Sigmoid colon (tissue), 7 donors: ENCODE measurements at regions of chr5 and their contacts with region 1.

Region 1: GRCh38 chr5:146291421-146292074 is 47.1 kb upstream of the POU4F3 start:
- DNase-seq: no peak
- H3K4me3 ChIP-seq: no peak overlapping the region
- H3K27ac ChIP-seq: no peak overlapping the region
- H3K4me1 ChIP-seq: peaks cover 0 to 5% (median 0%) of the 10 kb centered on the region in 4 donors
- H3K27me3 ChIP-seq: no peaks in the 10 kb centered on the region
- CTCF ChIP-seq: peak in 3 of 4 experiments; percentile 14 to 41 (median 22)
- EP300 ChIP-seq: no peak
- POLR2A ChIP-seq: no peak

Region 2: GRCh38 chr5:146203011-146203871 is 88.3 kb before region 1 on chr5 and contains the start of gene RBM27:
- intact Hi-C with region 1: no loop called
- DNase-seq: peak; percentile 99
- H3K4me3 ChIP-seq: peak within 1 kb of the TSS; percentile 68 to 98 (median 88)
- H3K27ac ChIP-seq: peak within 1 kb of the TSS; percentile 83 to 92 (median 86)
- H3K4me1 ChIP-seq: peaks cover 0 to 42% (median 33%) of the 10 kb centered on the region in 4 donors
- H3K27me3 ChIP-seq: no peaks in the 10 kb centered on the region
- CTCF ChIP-seq: no peak
- EP300 ChIP-seq: no peak
- POLR2A ChIP-seq: peak; percentile 54 to 62
- total RNA-seq, gene RBM27: 20.1 to 30.9 (median 25.0) TPM

Region 3: DNA sequence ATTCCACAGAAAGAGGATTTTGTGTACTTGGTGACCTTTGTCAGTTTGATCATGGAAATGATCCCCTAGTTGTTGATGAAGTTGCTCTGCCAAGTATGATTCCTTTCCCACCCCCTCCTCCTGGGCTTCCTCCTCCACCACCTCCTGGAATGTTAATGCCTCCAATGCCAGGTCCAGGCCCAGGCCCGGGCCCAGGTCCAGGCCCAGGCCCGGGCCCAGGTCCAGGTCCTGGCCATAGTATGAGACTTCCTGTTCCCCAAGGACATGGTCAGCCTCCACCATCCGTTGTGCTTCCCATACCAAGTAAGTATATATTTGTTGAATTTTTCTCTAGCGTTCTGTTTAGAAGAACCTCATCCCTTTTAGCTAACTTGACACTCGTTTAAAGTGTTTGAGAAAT is 58.1 kb before region 1 on chr5:
- intact Hi-C with region 1: no loop called
- DNase-seq: no peak
- H3K4me3 ChIP-seq: no peak overlapping the region
- H3K27ac ChIP-seq: no peak overlapping the region
- H3K4me1 ChIP-seq: peaks cover 0 to 8% (median 4%) of the 10 kb centered on the region in 4 donors
- H3K27me3 ChIP-seq: no peaks in the 10 kb centered on the region
- CTCF ChIP-seq: no peak
- EP300 ChIP-seq: no peak
- POLR2A ChIP-seq: no peak

Region 4: DNA sequence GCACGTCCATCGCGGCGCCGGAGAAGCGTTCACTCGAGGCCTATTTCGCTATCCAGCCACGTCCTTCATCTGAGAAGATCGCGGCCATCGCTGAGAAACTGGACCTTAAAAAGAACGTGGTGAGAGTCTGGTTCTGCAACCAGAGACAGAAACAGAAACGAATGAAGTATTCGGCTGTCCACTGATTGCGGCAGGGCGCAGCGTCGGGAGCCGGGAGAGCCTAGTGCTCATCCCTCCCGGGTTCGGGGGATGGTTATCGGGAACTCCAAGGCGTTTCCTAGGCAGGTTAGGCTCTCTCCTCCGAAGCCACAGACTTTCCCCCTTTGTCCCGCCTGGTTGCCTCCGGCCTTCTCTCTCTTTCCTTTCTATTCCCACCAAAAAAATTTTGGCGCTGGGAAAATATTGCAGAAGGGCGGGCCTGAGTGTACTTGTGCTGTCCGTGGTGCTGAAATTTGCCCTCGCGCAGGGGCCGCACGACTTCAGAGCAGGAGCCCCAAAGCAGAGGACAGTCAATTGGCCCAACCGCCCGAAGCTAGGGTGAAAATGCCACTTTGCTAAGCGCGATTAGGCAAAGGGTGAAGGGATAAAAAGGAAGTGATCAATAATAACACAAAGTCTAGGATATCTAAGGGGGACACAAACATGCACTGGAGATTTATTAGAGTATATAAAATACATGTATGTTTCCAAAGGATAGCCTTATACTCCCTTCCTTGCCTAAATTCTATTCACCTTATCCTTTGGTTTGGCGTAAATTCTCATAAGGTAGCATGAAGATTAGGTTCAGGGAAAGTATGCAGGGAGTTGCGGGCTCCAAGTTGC is 48.9 kb after region 1 on chr5:
- intact Hi-C with region 1: no loop called
- DNase-seq: no peak
- H3K4me3 ChIP-seq: peak overlapping the region in 1 of 4 donors; percentile 16
- H3K27ac ChIP-seq: no peak overlapping the region
- H3K4me1 ChIP-seq: peaks cover 0 to 22% (median 17%) of the 10 kb centered on the region in 4 donors
- H3K27me3 ChIP-seq: peaks cover 49 to 100% (median 94%) of the 10 kb centered on the region in 3 donors
- CTCF ChIP-seq: no peak
- EP300 ChIP-seq: no peak
- POLR2A ChIP-seq: no peak

Region 5: DNA sequence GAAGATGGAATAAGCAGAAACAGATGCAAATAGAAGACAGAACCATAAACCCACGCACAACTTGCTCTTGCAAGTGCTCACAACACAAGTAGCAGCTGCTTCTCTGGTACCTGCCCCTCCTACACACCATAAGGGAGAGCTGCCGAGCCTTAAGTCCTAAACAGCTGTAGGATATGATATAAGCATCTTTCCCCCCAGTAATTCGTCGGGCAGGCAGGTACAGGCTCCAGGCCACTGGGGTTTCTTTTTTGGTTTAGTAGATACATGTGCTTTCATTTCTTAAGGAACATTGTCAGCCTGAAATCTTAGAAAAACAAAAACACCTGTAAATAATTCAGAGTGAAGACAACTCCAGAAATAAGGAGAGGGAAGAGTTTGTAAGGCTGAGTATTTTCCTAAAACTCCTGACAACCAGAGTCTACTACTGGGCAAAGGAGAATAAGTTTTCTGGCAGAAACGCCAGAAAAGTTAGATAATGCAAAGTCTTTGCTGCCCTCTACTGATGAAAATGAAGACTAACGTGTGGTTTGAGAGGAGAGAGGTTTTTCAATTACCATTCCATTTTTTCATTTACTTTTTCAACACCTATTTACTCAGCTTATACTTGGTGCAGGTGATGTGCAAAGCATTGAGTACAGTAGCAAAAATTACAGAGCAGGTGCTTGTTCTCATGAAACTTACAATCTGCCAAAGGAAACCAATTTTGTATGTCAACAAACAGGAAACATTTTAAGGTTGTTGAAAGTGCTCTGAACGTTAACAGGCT is 135.5 kb after region 1 on chr5:
- intact Hi-C with region 1: loop called (anchors 1 kb)
- DNase-seq: no peak
- H3K4me3 ChIP-seq: no peak overlapping the region
- H3K27ac ChIP-seq: no peak overlapping the region
- H3K4me1 ChIP-seq: no peaks in the 10 kb centered on the region
- H3K27me3 ChIP-seq: peaks cover 0 to 31% (median 0%) of the 10 kb centered on the region in 3 donors
- CTCF ChIP-seq: peak; percentile 26 to 59 (median 50)
- EP300 ChIP-seq: no peak
- POLR2A ChIP-seq: no peak